ENCODE measurements at regions of chrX and their contacts with region 1.

Region 1: GRCh38 chrX:9708904-9709553 is 56.6 kb downstream of the GPR143 start:
- DNase-seq: peak; percentile 62 to 84 (median 74)
- H3K4me3 ChIP-seq: no peak overlapping the region
- H3K27ac ChIP-seq: no peak overlapping the region
- H3K27me3 ChIP-seq: peaks cover 0 to 17% (median 0%) of the 10 kb centered on the region in 45 donors
- CTCF ChIP-seq: peak; percentile 66 to 93 (median 86)

Region 2: GRCh38 chrX:8815464-8816065 is 893.5 kb before region 1 on chrX:
- intact Hi-C with region 1: loop called in 1 of 2 experiments (anchors 5 kb)
- DNase-seq: peak in 1 of 10 donors; percentile 5
- H3K4me3 ChIP-seq: no peak overlapping the region
- H3K27ac ChIP-seq: no peak overlapping the region
- H3K27me3 ChIP-seq: peaks cover 0 to 40% (median 7%) of the 10 kb centered on the region in 45 donors
- CTCF ChIP-seq: peak; percentile 46 to 89 (median 79)

Region 3: DNA sequence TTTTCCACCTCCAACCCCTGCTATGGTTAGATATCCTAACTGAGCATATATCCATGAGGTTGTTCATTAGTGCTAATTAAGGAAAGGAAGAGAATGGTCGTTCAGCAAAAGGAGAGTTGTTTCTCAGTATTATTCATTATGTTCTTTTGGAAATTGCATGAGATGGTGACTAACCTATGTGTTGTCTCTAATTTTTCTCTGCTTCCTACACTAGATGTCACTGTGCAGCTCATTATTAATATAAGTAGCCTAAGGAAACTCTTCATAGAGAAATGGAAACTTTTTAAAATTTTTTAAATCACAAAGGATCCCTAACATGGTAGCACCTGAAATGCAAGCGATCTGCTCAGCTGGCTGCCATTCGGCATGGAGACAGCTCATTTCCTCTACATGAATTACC is 840.1 kb before region 1 on chrX:
- intact Hi-C with region 1: loop called in 1 of 2 experiments (anchors 10 kb)
- DNase-seq: no peak
- H3K4me3 ChIP-seq: no peak overlapping the region
- H3K27ac ChIP-seq: no peak overlapping the region
- H3K27me3 ChIP-seq: peaks cover 0 to 59% (median 20%) of the 10 kb centered on the region in 45 donors
- CTCF ChIP-seq: peak in 43 of 56 donors; percentile 14 to 65 (median 38)

Region 4: DNA sequence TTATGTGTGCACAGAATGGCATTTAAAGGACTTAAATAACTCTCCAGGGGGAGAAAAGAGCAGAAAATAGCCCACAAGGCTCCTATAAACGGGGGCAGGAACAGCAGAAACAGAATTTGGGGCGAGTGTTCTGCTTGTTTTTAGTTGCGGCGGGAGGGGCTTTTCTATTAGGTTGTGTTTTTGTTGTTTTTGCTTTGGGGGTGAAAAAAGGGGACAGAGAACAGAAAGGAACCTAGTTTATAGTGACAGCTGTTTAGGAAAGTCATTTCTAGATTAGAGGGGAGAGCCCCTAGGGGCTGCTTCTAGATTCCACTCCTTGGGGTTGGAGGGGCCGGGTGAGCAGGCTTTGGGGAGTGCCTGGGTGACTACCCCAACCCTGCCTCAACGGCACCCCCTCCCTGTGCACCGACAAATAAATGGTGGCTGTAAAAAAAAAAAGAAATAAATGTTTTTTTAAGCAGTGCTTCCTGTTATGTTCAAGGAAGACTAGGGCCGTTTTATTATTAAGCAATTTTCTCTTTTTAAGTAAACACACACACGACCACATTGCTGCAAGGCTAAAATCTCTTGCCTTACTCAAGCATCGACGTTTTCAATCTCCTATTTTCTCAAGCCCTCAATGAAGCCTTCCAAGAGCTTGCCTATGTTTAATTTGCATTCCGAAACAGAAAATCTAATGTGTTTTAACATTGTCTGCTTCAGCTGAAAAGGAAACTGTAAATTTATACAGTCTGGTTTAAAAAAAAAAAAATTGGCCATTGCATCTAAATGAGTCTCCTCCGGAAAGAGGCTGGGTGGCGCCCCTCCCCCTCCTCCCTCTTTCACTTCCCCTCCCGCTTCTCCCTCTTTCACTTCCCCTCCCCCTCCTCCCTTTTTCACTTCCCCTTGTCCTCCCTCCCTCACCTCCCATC is 367.5 kb before region 1 on chrX:
- intact Hi-C with region 1: loop called in 1 of 2 experiments (anchors 5 kb)
- DNase-seq: peak in 6 of 10 donors; percentile 44 to 56 (median 47)
- H3K4me3 ChIP-seq: peak overlapping the region in 48 of 59 donors; percentile 1 to 57 (median 36)
- H3K27ac ChIP-seq: peak overlapping the region in 57 of 59 donors; percentile 1 to 88 (median 78)
- H3K27me3 ChIP-seq: peaks cover 0 to 44% (median 5%) of the 10 kb centered on the region in 45 donors
- CTCF ChIP-seq: peak in 5 of 56 donors; percentile 6 to 20 (median 16)

Region 5: DNA sequence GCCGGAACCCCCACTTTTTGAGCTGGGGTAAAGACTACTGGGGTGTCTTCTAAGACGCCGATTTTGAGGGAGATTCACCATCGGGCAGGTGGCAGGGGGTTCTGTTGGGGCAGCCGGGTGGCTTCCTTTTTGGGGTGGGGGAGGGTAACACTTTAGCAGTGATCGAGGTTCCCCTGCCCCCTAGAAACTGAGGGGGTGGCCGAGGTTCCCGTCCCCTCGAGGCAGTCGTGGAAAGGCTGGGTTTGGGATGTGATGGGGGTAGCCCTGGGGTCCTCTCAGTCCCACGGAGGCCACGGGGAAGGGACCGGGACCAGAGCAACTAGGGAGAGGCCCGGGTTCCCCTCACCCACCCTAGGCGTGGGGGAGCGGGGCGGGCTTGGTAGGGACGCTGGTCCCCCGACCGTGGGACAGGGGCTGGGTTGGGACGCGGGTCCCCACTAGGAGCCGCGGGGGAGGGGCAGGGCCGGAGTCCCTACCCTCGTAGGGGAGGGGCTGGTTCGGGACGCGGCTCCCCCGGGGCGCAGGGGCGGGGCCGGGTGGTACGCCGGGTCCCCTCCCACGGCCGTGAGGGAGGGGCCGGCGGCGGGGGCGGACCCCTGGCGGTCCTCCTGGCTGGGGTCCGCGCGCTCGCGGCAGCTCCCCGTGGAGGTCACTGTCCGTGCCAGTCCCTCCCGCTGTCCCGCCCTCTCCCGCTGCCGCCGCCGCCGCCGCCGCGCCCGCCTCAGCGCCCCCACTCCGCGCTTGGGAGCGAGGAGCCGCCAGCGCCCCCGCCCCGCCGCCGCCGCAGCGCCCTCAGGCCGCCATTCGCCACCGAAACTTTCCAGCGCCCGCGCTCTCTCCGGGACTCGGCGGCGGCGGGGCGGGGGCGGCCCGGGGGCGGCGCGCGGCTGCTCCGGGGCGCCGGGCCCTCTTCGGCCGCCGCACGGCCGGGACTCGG is 244.3 kb before region 1 on chrX and contains the start of gene TBL1X:
- intact Hi-C with region 1: loop called (anchors 2 to 10 kb)
- DNase-seq: peak in 4 of 10 donors; percentile 14 to 63 (median 40)
- H3K4me3 ChIP-seq: peak within 1 kb of the TSS; percentile 38 to 79 (median 63)
- H3K27ac ChIP-seq: peak within 1 kb of the TSS in 55 of 59 donors; percentile 32 to 88 (median 77)
- H3K27me3 ChIP-seq: peaks cover 0 to 85% (median 34%) of the 10 kb centered on the region in 45 donors
- CTCF ChIP-seq: peak in 1 of 56 donors; percentile 17
- total RNA-seq, gene TBL1X: 12.6 to 42.3 (median 21.6) TPM

Region 6: DNA sequence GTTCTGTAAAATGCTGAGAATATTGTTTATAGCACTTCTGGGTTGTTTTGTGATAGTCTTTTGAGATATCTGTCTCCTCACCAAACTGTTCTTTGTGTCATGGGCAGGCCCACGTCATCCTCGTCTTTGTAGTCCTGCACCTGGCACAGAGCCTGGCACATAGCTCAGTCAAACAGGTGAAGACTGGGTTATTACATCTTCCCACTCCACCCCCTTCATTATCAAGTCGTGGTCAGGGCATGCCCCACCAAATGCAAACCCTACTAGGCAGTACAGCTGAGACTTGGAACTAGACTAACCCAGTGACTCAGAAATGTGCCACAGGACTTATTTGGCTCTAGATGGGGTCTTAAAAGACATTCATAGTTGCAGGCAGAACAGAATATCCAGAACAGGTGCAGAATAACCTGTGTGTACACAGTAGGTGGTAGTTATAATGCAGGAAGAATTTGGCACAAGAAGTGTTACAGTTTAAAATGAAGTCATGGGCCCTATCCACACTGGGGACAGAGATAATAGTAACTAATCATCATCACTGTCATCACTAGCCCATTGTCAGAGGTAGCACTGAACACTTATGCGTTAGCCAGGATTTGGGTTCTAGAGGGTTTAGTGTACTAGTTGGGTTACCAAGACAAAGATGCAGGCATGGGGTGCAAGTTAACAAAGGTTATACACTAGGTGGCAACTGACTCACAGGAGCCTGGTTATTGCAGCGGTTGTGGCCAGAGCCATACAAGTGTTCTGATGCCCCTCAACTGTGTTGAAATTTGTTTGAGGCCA is 169.2 kb before region 1 on chrX:
- intact Hi-C with region 1: loop called in 1 of 2 experiments (anchors 10 kb)
- DNase-seq: no peak
- H3K4me3 ChIP-seq: no peak overlapping the region
- H3K27ac ChIP-seq: no peak overlapping the region
- H3K27me3 ChIP-seq: peaks cover 0 to 56% (median 6%) of the 10 kb centered on the region in 45 donors
- CTCF ChIP-seq: no peak

Region 7: GRCh38 chrX:9656277-9656676 is 52.8 kb before region 1 on chrX:
- intact Hi-C with region 1: no loop called
- DNase-seq: no peak
- H3K4me3 ChIP-seq: no peak overlapping the region
- H3K27ac ChIP-seq: no peak overlapping the region
- H3K27me3 ChIP-seq: peaks cover 0 to 50% (median 5%) of the 10 kb centered on the region in 45 donors
- CTCF ChIP-seq: no peak